Gastrocnemius medialis (tissue), 4 donors: ENCODE measurements at regions of chr19 and their contacts with region 1.

Region 1: GRCh38 chr19:39445265-39446111 is at the start of gene SUPT5H:
- DNase-seq: peak; percentile 96 to 97
- ATAC-seq: peak; percentile 96 to 99
- H3K4me3 ChIP-seq: peak within 1 kb of the TSS; percentile 74 to 99 (median 86)
- H3K27ac ChIP-seq: peak within 1 kb of the TSS; percentile 89 to 98 (median 94)
- H3K4me1 ChIP-seq: peaks cover 14 to 27% of the 10 kb centered on the region in 2 donors
- H3K27me3 ChIP-seq: no peaks in the 10 kb centered on the region
- CTCF ChIP-seq: no peak
- POLR2A ChIP-seq: peak; percentile 89 to 95
- total RNA-seq, gene SUPT5H: 60.7 to 148 (median 108) TPM

Region 2: GRCh38 chr19:39328046-39328705 is 117.3 kb before region 1 on chr19:
- in situ Hi-C with region 1: no loop called
- intact Hi-C with region 1: no loop called
- DNase-seq: peak; percentile 54 to 70
- ATAC-seq: peak; percentile 72 to 77
- H3K4me3 ChIP-seq: no peak overlapping the region
- H3K27ac ChIP-seq: no peak overlapping the region
- H3K4me1 ChIP-seq: peaks cover 0 to 3% of the 10 kb centered on the region in 2 donors
- H3K27me3 ChIP-seq: peaks cover 0 to 4% (median 0%) of the 10 kb centered on the region in 3 donors
- CTCF ChIP-seq: peak; percentile 73 to 97 (median 90)
- POLR2A ChIP-seq: no peak

Region 3: GRCh38 chr19:39390755-39391592 is 54.5 kb before region 1 on chr19 and contains the starts of genes MED29 and PAF1:
- in situ Hi-C with region 1: no loop called
- intact Hi-C with region 1: loop called (anchors 1 kb)
- DNase-seq: peak; percentile 99
- ATAC-seq: peak; percentile 99 to 100
- H3K4me3 ChIP-seq: peak within 1 kb of the TSS; percentile 87 to 94 (median 88)
- H3K27ac ChIP-seq: peak within 1 kb of the TSS; percentile 92 to 99 (median 97)
- H3K4me1 ChIP-seq: peaks cover 17 to 20% of the 10 kb centered on the region in 2 donors
- H3K27me3 ChIP-seq: no peaks in the 10 kb centered on the region
- CTCF ChIP-seq: peak in 1 of 5 experiments; percentile 11
- POLR2A ChIP-seq: peak; percentile 87 to 95
- total RNA-seq, gene MED29: 25.5 to 48.1 (median 37.7) TPM
- total RNA-seq, gene PAF1: 48.1 to 65.3 (median 50.2) TPM

Region 4: GRCh38 chr19:39412100-39412866 is 33.2 kb before region 1 on chr19 and contains the start of gene PLEKHG2:
- in situ Hi-C with region 1: no loop called
- intact Hi-C with region 1: loop called (anchors 2 kb)
- DNase-seq: peak; percentile 97 to 98
- ATAC-seq: peak; percentile 63 to 73
- H3K4me3 ChIP-seq: peak within 1 kb of the TSS; percentile 81 to 99 (median 94)
- H3K27ac ChIP-seq: peak within 1 kb of the TSS; percentile 98 to 100 (median 100)
- H3K4me1 ChIP-seq: peaks cover 15 to 19% of the 10 kb centered on the region in 2 donors
- H3K27me3 ChIP-seq: no peaks in the 10 kb centered on the region
- CTCF ChIP-seq: peak; percentile 90 to 98 (median 97)
- POLR2A ChIP-seq: peak; percentile 70 to 87
- total RNA-seq, gene PLEKHG2: 1.3 to 3.6 (median 3.3) TPM

Region 5: GRCh38 chr19:39671738-39672363 is 226.4 kb after region 1 on chr19:
- in situ Hi-C with region 1: no loop called
- intact Hi-C with region 1: loop called (anchors 10 kb)
- DNase-seq: no peak
- ATAC-seq: peak; percentile 69 to 72
- H3K4me3 ChIP-seq: no peak overlapping the region
- H3K27ac ChIP-seq: no peak overlapping the region
- H3K4me1 ChIP-seq: no peaks in the 10 kb centered on the region
- H3K27me3 ChIP-seq: peaks cover 0 to under 1% (median 0%) of the 10 kb centered on the region in 3 donors
- CTCF ChIP-seq: peak; percentile 54 to 65 (median 62)
- POLR2A ChIP-seq: no peak

Region 6: DNA sequence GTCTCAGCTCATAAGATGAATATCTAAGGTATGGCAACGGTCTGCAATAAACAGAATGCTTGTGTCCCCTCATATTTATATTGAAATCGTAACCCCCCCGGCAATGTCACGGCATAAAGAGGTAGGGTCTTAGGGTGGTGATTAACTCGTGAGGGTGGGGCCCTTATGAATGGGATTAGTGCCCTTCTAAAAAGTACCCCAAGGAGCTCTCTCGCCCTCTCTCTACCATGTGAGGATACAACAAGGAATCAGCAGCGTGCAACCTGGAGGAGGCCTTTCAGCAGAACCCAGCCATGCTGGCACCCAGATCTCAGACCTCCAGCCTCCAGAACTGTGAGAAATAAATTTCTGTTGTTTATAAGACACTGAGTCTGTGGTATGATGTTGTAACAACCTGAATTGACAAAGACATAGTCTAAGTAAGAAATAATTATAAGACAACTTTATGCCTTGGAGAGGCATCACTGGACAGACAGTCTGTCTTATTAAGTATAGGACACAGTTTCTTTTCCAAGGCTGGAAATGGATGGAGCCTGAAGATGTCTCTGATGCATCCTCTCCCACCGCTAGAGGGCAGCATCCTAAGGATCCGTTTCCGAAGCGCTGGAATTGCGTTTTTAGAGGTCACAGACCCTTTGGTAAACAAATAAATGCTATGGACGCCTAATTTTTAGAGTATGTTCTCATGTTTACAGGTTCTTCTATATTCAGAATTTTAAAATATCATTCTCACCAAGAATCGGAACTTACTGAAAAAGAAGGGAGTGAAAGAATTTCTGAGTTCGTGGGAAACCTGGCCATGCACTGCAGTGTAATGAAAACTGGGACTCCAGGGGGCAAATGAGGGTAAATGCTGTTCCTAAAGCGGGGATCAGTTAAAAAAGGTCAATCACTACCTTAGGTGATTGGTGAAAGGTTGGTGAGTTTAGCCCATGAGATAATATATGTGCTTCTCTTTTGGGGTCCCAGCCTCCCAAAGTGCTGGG is 319.9 kb after region 1 on chr19:
- in situ Hi-C with region 1: no loop called
- intact Hi-C with region 1: no loop called
- DNase-seq: peak in 1 of 2 donors; percentile 18
- ATAC-seq: no peak
- H3K4me3 ChIP-seq: no peak overlapping the region
- H3K27ac ChIP-seq: no peak overlapping the region
- H3K4me1 ChIP-seq: peaks cover 0 to 2% of the 10 kb centered on the region in 2 donors
- H3K27me3 ChIP-seq: no peaks in the 10 kb centered on the region
- CTCF ChIP-seq: peak; percentile 34 to 70 (median 49)
- POLR2A ChIP-seq: no peak